ENCODE measurements at regions of chr14 and their contacts with region 1.

Region 1: DNA sequence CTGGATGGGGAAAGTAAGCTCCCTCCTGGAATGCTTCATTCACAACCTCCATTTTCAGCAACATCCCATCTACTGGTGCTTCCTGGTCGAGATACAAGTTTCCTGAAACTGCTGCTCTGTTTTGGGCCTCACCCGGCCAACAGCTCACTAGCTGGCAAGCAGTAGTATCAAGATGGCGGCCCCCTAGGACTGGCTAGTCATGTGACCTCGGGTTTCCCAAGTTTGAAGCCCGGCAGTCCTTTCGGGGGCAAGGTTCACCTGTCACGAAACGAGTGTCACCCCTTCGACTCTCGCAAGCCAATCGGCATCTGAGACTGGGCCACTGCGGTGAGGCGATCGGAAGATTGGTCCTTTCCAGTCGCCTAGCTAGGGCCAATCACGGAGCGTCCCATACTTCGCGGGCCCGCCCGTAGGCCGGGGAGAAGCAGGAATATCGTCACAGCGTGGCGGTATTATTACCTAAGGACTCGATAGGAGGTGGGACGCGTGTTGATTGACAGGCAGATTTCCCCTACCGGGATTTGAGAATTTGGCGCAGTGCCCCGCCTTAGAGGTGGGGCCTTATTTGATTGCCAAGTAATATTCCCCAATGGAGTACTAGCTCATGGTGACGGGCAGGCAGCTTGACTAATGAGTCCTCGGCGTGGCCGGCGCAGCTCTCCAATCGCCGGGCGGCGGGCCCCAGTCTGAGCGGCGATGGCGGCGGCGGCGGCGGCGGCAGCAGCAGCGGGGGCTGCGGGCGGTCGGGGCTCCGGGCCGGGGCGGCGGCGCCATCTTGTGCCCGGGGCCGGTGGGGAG is at the start of gene PABPN1:
- DNase-seq: peak; percentile 99
- ATAC-seq: peak; percentile 88
- H3K4me3 Mint-ChIP-seq: peak within 1 kb of the TSS; percentile 95
- H3K27ac Mint-ChIP-seq: peak within 1 kb of the TSS; percentile 95
- H3K4me1 Mint-ChIP-seq: peaks cover 22% of the 10 kb centered on the region
- H3K27me3 Mint-ChIP-seq: no peaks in the 10 kb centered on the region
- CTCF ChIP-seq: no peak
- total RNA-seq, gene PABPN1: 258 to 260 TPM

Region 2: DNA sequence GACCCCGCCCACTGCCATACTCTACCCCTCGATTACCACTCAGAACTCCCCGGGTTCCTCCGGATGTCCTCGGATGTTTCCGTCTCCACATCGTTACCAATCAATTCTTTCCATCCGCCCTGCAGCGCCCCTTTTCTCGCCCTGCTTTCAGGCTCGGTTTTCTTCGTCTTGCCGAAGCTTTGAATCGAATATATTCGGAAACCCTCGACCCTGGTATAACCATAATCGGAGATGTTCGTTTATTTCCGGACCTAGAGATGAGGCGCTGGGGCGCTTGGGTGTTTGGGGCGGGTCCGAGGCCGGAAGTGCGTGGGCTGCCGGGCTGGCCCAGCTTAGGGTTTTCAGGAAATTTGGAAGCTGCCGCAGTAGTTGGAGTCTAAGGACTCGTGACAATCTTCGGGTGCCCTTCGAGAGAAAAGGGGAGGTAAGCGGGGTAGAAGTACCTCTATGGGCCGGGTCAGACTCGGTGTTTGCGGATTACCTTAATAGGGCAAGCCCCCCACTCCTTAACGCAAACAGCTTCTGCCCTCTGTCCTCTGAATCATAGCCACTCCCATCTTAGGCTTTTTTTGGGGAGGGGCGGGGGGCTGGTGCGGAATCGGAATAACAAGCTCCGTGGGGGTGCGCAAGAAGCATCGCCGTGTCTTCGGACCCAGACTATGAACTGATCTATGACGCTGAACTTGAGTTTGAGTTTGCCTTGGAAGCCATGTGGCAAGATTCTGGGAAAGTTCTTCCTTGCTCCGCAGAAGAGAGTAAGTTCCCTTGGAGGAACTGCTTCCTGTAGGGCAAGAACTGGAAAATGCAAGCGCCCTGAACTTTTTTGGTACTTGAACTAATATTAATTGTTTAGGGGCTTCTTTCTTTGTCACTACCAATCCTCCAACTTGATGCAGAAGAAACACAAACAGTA is 225.5 kb before region 1 on chr14 and contains the start of gene C14orf119:
- CTCF ChIA-PET with region 1: no interaction called
- POLR2A ChIA-PET with region 1: interaction called, 13 read pairs
- intact Hi-C with region 1: no loop called
- DNase-seq: peak; percentile 100
- ATAC-seq: peak; percentile 91
- H3K4me3 Mint-ChIP-seq: no peak within 1 kb of the TSS
- H3K27ac Mint-ChIP-seq: no peak within 1 kb of the TSS
- H3K4me1 Mint-ChIP-seq: peaks cover 34% of the 10 kb centered on the region
- H3K27me3 Mint-ChIP-seq: no peaks in the 10 kb centered on the region
- CTCF ChIP-seq: no peak
- total RNA-seq, gene C14orf119: 49.2 to 51.1 TPM

Region 3: DNA sequence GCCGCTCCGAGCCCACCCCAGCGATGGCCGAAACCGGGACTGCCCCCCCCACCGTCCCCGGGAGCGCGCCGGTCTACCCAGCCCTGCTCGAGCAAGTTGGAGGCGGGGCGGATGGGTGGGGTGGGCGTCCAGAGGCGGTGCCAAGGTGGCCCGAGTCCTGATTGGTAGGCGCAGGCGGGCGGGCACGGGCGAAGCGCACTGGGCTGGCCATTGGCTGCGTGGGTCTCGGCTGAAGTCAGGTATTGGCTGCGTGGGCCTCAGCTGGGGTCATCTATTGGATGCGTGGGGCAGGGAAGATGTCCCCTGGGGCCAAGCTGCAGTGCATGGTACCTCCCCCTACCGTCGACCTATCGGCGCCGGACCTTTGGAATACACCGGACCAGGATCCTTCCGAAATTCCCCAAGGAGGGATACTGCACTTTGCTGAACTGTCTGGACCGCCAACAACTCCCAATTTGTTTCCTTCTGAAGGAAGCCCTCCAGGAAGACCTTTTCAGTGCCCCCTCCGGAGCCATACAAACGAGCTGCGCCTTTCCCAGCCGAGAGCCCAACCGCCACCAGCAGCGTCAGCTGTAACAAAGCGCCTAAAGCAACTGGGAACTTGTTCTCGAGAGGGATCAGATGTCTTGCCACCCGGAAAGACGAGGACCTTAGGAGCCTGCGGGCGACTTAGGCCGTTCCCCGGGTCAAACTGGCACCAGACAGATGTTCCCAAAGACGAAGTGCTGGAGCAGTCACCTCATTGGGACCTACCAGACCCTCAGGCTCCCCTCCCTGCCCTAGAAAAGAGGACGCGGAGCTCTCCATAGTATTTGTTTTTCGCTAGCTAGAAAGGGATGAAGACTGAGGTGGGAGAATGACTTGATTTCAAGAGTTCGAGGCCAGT is 34.7 kb before region 1 on chr14 and contains the start of gene HOMEZ:
- CTCF ChIA-PET with region 1: interaction called, 12 read pairs
- POLR2A ChIA-PET with region 1: interaction called, 13 read pairs
- intact Hi-C with region 1: loop called (anchors 5 kb)
- DNase-seq: peak; percentile 99
- ATAC-seq: peak; percentile 99
- H3K4me3 Mint-ChIP-seq: peak within 1 kb of the TSS; percentile 95
- H3K27ac Mint-ChIP-seq: peak within 1 kb of the TSS; percentile 93
- H3K4me1 Mint-ChIP-seq: peaks cover 26% of the 10 kb centered on the region
- H3K27me3 Mint-ChIP-seq: no peaks in the 10 kb centered on the region
- CTCF ChIP-seq: no peak
- total RNA-seq, gene HOMEZ: 10.9 to 11.8 TPM

Region 4: GRCh38 chr14:23301288-23301968 is 19.5 kb before region 1 on chr14:
- CTCF ChIA-PET with region 1: interaction called, 78 read pairs
- POLR2A ChIA-PET with region 1: interaction called, 139 read pairs
- intact Hi-C with region 1: loop called (anchors 2 kb)
- DNase-seq: peak; percentile 97
- ATAC-seq: peak; percentile 81
- H3K4me3 Mint-ChIP-seq: peak overlapping the region; percentile 92
- H3K27ac Mint-ChIP-seq: peak overlapping the region; percentile 97
- H3K4me1 Mint-ChIP-seq: peaks cover 20% of the 10 kb centered on the region
- H3K27me3 Mint-ChIP-seq: peaks cover 12% of the 10 kb centered on the region
- CTCF ChIP-seq: peak; percentile 73

Region 5: DNA sequence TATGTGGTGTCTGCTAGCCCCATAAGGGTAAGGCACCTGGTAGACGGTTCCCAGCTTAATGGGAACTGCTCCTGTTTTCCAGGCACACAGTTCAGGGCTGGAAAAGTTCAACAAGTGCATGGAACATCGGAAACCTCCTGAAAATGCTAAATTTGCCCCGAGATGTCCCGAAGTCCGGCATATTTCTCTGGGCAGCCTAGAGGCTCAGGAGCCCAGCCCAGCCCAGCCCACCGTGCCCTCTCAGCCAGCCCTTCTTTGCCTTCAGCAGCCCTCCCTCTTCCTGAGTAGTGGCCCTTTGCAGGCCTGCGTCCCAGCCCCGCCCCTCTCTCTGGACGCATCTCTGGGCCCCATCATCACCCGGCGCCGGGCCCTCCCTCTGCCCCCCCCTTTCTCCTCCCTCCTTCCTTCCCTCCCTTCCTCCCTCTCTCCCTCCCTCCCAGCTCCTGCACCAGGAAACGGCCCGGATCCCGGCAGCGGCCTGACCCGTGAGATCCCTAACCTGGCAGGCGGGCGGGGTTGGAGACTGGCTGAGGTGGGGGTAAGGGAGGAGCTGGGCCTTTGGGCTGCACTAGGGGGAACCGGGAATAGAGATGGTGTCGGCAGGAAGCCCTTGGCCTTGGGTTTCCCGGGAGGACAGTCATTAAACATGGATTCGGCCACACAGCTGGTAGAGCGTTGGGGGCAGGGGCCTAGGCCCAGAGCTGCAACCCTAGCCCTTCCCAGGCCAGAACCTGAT is 14.4 kb before region 1 on chr14 and contains the start of gene BCL2L2:
- CTCF ChIA-PET with region 1: interaction called, 78 read pairs
- POLR2A ChIA-PET with region 1: interaction called, 139 read pairs
- intact Hi-C with region 1: loop called (anchors 2 kb)
- DNase-seq: peak; percentile 48
- ATAC-seq: no peak
- H3K4me3 Mint-ChIP-seq: peak within 1 kb of the TSS; percentile 9
- H3K27ac Mint-ChIP-seq: no peak within 1 kb of the TSS
- H3K4me1 Mint-ChIP-seq: peaks cover 6% of the 10 kb centered on the region
- H3K27me3 Mint-ChIP-seq: peaks cover 25% of the 10 kb centered on the region
- CTCF ChIP-seq: no peak
- total RNA-seq, gene BCL2L2: 1.1 to 1.3 TPM

Region 6: DNA sequence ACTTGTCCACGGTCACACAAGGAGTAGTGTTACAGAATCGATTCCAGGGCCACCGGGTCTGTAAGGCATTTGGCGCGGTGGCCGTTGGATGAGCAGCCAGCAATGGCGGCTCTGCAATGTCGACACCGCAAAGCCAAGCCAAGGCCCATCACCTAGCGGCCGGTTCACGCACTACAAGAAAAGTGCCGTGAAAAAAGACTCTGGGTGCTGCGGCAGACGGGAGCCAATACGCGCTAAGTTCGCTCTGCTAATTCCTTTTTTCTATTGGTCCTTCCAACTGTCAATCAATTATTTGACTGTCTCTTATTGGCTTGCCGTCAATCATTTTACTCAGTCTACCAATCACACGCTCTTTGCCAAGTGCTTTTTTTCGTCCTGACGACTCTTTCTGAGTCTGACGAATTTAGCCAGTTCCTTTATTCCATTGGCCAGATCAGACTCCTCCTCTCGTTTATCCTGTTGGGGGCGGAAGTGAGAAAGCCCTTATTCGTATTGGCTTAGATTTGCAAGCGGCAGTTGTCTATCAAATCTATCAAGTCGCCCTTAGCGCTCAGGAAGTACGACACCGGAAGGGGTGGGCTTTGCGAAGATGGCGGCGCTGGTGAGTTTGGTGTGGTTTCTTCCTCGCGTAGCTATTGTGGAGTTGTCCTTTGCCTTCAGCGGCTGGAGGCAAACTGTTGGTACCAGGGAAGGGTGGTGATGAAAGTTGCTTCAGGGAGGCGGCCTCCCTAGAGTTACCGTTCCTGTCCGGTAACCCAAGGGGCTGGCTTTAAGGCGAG is 148.3 kb after region 1 on chr14 and contains the start of gene NGDN:
- CTCF ChIA-PET with region 1: interaction called, 5 read pairs
- POLR2A ChIA-PET with region 1: interaction called, 4 read pairs
- intact Hi-C with region 1: loop called (anchors 2 kb)
- DNase-seq: peak; percentile 96
- ATAC-seq: peak; percentile 93
- H3K4me3 Mint-ChIP-seq: no peak within 1 kb of the TSS
- H3K27ac Mint-ChIP-seq: no peak within 1 kb of the TSS
- H3K4me1 Mint-ChIP-seq: peaks cover 17% of the 10 kb centered on the region
- H3K27me3 Mint-ChIP-seq: no peaks in the 10 kb centered on the region
- CTCF ChIP-seq: peak; percentile 78
- total RNA-seq, gene NGDN: 50.9 to 57.4 TPM

Region 7: DNA sequence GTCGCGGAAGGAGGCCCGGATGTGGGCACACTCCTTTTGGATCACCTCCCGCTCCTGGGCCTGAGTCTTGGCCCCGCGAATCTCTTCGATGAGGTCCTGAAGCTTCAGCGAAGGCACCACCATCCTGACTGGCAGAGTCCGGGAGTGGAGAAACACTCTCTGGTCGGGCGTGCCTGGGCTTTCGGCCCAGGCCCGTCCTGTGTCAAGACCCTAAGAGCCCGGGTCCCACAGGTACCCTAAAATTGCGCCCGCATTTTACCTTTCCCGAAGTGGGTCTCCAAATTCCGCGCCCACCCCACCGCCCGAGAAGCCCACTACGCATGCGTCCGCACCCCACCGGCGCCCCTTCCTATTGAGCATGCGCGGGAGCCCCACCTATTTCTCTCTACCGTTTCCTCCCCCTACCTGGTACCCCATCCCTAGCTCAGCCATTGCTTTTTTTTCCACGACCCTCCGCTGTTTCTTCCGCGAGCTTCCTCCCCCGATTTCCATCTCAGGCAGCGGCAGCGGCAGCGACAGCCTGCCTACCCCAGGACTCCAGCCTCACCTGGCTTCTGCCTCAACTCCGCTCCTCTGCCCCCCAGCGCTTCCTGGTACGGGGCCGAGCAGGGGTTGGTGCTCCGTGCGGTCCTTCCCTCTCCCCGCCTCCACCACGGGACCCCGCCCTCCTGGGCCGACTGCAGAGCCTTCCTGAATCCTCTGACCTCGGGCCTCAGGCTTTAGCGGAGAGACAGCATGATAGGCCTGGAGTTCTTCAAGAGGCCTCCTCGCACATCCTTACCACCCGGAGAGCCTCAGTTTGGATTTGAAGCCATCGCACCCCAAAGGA is 246.4 kb after region 1 on chr14 and contains the start of gene AP1G2:
- CTCF ChIA-PET with region 1: no interaction called
- POLR2A ChIA-PET with region 1: interaction called, 7 read pairs
- intact Hi-C with region 1: loop called (anchors 5 kb)
- DNase-seq: peak; percentile 94
- ATAC-seq: peak; percentile 97
- H3K4me3 Mint-ChIP-seq: peak within 1 kb of the TSS; percentile 94
- H3K27ac Mint-ChIP-seq: peak within 1 kb of the TSS; percentile 99
- H3K4me1 Mint-ChIP-seq: peaks cover 23% of the 10 kb centered on the region
- H3K27me3 Mint-ChIP-seq: peaks cover 3% of the 10 kb centered on the region
- CTCF ChIP-seq: no peak
- total RNA-seq, gene AP1G2: 146 to 155 TPM

Region 8: DNA sequence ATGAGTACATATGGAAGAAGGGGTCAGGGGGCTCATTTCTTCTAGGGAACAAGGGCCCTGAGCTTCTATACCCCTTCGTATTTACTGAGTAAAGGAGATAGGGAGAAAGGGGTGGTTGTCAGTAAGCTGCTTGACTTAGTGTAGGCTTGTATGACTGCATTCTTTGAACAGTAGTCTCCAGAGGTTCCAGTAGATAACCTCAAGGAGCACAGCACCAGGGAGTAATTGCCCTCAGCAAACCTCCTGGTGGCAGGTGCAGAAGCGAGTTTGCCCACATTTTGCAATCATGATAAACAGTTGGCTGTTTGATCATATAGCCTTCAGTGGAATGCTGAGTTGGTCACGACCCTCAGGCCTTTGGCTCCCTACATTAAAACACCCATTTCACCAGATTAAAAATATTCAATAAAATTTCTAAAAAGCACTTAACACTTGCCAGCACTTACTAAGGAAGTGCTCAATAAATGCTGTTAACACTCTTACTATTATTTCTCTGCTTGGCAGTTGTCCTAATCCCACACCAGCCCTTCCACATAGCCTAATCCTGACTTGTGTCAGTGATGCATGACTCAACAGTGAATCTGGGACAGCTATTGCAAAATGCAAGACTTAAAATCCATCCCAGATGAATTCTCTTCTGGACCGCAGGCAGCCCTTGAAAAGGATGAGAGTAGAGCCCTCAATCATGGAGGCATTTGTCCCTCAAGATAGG is 664.1 kb after region 1 on chr14:
- CTCF ChIA-PET with region 1: no interaction called
- POLR2A ChIA-PET with region 1: no interaction called
- intact Hi-C with region 1: no loop called
- DNase-seq: no peak
- ATAC-seq: no peak
- H3K4me3 Mint-ChIP-seq: no peak overlapping the region
- H3K27ac Mint-ChIP-seq: no peak overlapping the region
- H3K4me1 Mint-ChIP-seq: peaks cover 26% of the 10 kb centered on the region
- H3K27me3 Mint-ChIP-seq: no peaks in the 10 kb centered on the region
- CTCF ChIP-seq: no peak